A549 (cell line): ENCODE measurements at regions of chr7 and their contacts with region 1.

Region 1: DNA sequence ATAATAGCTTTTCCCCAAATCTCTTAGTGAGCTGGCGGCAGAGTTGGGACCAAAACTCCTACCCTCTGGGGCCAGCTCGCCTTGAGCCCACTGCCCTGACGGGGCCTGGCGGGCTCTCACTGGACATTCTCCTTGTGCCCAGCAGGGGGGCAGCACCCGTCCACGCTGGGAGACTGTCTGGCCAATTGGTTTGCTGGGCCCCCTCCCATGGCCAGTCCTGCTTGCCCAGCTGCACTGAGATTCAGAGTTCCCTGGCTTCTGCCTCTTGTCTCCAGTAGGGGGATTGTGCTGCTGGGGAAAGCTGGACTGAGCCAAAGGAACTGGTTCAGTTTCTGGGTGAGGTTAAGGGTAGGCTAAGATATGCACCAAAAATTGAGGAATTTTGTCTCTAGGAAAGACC is 59.8 kb downstream of the RAMP3 start:
- DNase-seq: peak; percentile 38 to 57
- ATAC-seq: peak; percentile 85 to 93
- H3K4me3 ChIP-seq: no peak overlapping the region
- H3K27ac ChIP-seq: no peak overlapping the region
- H3K4me1 ChIP-seq: no peaks in the 10 kb centered on the region
- CTCF ChIP-seq: peak; percentile 25; the same call in 2 of the 3 replicates
- EP300 ChIP-seq: no peak
- POLR2A ChIP-seq: no peak
- RAD21 ChIP-seq: peak; percentile 19 to 39; a peak in 2 of 5 replicates

Region 2: DNA sequence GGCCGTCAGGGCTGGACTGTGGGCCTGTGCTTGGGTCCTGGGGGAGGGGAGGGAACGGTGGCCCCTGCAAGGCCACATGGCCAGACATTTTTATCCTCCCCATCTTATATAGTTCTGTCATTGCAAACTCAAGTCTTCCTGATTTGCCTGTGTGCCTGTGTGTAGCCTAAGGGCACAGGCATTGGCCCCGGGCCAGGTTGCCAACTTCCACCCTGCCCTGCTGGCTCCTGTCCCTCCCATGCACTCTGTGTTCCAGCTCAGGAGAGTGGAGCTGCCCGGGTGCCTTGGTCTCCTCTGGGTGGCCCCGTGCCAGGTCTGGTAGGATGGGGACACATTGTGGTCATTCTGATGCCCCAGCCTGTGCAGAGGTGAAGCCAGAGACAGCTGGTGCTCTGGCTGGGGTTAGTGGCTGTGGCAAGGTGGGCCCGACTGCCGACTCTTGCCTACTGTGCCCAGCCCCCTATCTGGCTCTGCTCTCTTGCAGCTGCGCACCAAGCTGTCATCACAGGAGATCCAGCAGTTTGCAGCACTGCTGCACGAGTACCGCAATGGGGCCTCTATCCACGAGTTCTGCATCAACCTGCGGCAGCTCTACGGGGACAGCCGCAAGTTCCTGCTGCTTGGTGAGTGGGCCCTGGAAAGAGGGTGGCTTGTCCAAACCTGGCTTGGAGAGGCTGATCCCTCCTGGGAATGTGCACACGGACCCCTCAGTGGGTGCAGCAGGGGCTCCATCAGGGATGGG is 143.4 kb before region 1 on chr7:
- CTCF ChIA-PET with region 1: no interaction called
- POLR2A ChIA-PET with region 1: no interaction called
- DNase-seq: no peak
- ATAC-seq: peak in 1 of 2 experiments; percentile 15; a peak in 1 of 6 replicates
- H3K4me3 ChIP-seq: no peak overlapping the region
- H3K27ac ChIP-seq: no peak overlapping the region
- H3K4me1 ChIP-seq: peaks cover 4% of the 10 kb centered on the region; the same call in 1 of the 3 replicates
- CTCF ChIP-seq: no peak
- EP300 ChIP-seq: no peak
- POLR2A ChIP-seq: no peak
- RAD21 ChIP-seq: no peak

Region 3: GRCh38 chr7:45146531-45147379 is 70.6 kb before region 1 on chr7:
- CTCF ChIA-PET with region 1: no interaction called
- POLR2A ChIA-PET with region 1: no interaction called
- DNase-seq: no peak
- ATAC-seq: peak in 1 of 2 experiments; percentile 26; a peak in 1 of 6 replicates
- H3K4me3 ChIP-seq: no peak overlapping the region
- H3K27ac ChIP-seq: no peak overlapping the region
- H3K4me1 ChIP-seq: no peaks in the 10 kb centered on the region
- CTCF ChIP-seq: no peak
- EP300 ChIP-seq: no peak
- POLR2A ChIP-seq: no peak
- RAD21 ChIP-seq: no peak

Region 4: DNA sequence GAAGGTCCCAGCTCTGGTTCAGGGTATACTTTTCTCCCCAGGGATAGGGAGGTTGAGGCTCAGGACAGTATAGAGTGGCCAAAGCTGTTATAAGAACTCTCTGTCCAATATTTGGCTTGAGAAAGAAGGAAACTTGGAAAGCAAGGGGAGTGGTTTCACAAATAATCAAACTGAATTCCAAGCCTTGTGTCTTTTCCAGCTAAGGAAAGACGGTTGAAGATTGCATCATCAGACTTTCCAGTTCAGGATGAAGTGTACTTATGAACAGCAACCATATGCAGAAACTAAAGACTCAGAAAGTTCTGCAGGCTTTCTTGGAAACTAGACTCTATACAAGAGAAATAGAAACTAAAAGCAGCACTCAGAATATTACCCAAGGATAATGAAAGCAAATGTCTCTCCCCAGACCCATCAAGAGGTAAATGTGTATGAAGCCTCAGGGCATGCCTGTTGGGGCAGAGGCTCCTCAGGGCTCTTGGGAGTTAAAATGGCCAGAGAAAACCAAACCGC is 13.4 kb before region 1 on chr7:
- CTCF ChIA-PET with region 1: interaction called, 10 read pairs
- POLR2A ChIA-PET with region 1: no interaction called
- DNase-seq: no peak
- ATAC-seq: no peak
- H3K4me3 ChIP-seq: no peak overlapping the region; the same call in 2 of the 3 replicates
- H3K27ac ChIP-seq: peak overlapping the region; percentile 9 to 20; a peak in 1 of 6 replicates
- H3K4me1 ChIP-seq: peaks cover 5% of the 10 kb centered on the region; the same call in 1 of the 3 replicates
- CTCF ChIP-seq: no peak
- EP300 ChIP-seq: no peak
- POLR2A ChIP-seq: no peak
- RAD21 ChIP-seq: no peak